ENCODE measurements at regions of chr9 and their contacts with region 1.

Region 1: DNA sequence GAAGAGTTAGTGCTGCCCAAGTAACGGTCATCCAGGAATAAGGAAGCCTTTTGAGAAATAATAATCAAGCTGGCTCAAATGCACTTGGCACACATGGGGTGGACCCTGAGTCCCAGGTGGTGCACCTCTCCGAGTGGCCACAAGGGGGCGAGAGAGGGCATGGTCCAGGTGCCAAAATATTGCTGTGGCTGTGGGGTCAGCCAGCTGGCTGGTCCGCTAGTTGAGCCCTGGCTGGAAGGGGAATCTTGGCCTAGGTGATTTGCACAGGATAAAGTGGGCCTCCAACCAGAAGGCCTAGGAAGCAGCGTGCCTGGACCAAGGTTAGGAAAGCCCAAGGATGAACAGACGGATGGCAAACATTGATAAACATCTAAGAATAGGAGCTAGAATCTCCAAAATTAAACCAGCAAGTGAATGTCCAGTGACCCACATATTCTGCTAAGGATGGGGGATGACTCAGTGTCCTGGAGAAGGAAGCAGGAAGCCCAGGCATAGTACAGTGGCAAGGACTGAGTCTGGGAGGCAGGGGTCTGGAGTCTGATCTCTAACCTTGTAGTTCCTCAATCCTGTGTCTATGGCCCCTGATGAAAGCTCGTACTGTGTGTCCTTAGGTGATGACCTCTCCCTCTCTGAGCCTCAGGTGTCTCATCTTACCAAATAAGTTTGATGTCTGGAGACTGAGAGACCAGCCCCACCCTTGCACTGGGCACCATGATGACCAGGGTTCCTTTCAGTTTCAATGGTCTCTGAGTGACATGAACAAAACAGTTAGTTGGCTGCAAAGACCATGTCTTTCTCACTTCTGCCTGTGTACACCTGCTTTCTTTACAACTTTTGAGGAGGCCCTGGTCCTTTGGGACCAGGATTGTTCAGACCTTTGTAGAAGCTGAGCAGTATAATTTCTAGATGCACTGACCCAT is 19.2 kb upstream of the SHB start:
- DNase-seq: no peak
- H3K4me3 ChIP-seq: no peak overlapping the region
- H3K27ac ChIP-seq: no peak overlapping the region
- H3K27me3 ChIP-seq: no peaks in the 10 kb centered on the region
- CTCF ChIP-seq: peak; percentile 96

Region 2: GRCh38 chr9:37913480-37914153 is 174.6 kb before region 1 on chr9:
- CTCF ChIA-PET with region 1: interaction called, 28 read pairs
- POLR2A ChIA-PET with region 1: no interaction called
- DNase-seq: no peak
- H3K4me3 ChIP-seq: no peak overlapping the region
- H3K27ac ChIP-seq: no peak overlapping the region
- H3K27me3 ChIP-seq: no peaks in the 10 kb centered on the region
- CTCF ChIP-seq: peak; percentile 99

Region 3: DNA sequence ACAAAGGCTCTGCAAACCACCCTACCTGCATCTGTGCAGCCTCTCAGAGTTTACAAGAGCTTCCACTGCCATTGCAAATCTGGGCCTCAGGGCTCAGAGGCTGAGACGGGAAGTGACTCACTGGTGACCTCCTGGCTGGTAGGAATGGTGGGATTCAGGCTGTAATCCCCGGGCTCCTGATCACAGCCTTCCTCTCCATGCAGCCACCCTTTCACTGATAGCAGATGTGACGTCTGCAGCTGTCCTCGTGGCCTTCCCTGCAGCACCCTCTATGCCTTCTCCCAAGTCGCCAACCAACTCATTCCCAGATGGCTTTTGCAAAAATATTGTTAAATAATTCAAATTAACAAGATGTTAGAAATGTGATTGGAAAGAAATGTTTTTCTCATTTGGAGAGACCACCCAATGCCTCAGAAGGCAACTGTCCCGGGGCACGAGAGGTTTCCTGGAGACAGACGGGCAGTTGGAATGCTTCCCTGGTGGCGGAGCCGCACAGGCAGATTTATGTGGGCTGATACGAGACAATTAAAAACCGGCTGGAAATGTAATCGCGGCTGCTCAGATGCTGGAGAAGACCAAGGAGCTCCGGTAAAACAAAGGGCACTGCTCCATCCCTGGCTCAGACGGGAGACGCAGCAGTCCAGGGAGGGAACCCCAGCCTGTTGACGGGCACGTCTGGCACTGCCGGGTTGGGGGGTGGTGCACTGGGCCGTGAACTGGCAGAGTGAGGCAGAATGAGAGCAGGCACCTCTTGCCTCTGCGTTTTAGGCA is 150.0 kb before region 1 on chr9:
- CTCF ChIA-PET with region 1: interaction called, 11 read pairs
- POLR2A ChIA-PET with region 1: no interaction called
- DNase-seq: peak; percentile 41
- H3K4me3 ChIP-seq: peak overlapping the region; percentile 7
- H3K27ac ChIP-seq: peak overlapping the region; percentile 87
- H3K27me3 ChIP-seq: no peaks in the 10 kb centered on the region
- CTCF ChIP-seq: 0 out of 2 replicates have a peak, but pooled peaks have one; percentile 7

Region 4: GRCh38 chr9:38068866-38069629 is 19.2 kb before region 1 on chr9 and contains the start of gene SHB:
- CTCF ChIA-PET with region 1: interaction called, 16 read pairs
- POLR2A ChIA-PET with region 1: no interaction called
- DNase-seq: no peak
- H3K4me3 ChIP-seq: peak within 1 kb of the TSS; percentile 93
- H3K27ac ChIP-seq: peak within 1 kb of the TSS; percentile 11
- H3K27me3 ChIP-seq: no peaks in the 10 kb centered on the region
- CTCF ChIP-seq: no peak; the same call in 1 of the 2 replicates
- polyA plus RNA-seq, gene SHB: 16.7 and 20.3 TPM in 2 replicates

Region 5: DNA sequence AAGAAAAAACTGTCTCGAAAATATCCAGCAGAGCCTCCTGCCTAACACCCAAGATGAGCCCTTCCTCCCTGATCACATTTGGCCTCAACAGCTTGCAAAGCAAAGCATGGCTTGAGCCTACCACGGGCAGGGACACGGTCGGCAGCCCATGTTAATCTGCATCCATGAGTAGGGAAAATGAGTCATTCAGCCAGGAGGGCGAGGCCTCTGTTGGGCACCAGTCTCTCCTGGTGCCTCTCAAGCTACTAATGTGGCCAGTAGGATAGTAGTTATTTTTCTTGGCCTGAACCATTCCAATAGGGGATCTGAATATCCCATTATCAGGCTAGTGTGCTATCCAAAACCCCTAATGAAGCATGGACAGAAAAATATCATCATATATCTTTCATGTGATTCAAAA is 23.8 kb after region 1 on chr9:
- CTCF ChIA-PET with region 1: interaction called, 10 read pairs
- POLR2A ChIA-PET with region 1: no interaction called
- DNase-seq: no peak
- H3K4me3 ChIP-seq: no peak overlapping the region
- H3K27ac ChIP-seq: no peak overlapping the region
- H3K27me3 ChIP-seq: peaks cover 41% of the 10 kb centered on the region
- CTCF ChIP-seq: no peak

Region 6: DNA sequence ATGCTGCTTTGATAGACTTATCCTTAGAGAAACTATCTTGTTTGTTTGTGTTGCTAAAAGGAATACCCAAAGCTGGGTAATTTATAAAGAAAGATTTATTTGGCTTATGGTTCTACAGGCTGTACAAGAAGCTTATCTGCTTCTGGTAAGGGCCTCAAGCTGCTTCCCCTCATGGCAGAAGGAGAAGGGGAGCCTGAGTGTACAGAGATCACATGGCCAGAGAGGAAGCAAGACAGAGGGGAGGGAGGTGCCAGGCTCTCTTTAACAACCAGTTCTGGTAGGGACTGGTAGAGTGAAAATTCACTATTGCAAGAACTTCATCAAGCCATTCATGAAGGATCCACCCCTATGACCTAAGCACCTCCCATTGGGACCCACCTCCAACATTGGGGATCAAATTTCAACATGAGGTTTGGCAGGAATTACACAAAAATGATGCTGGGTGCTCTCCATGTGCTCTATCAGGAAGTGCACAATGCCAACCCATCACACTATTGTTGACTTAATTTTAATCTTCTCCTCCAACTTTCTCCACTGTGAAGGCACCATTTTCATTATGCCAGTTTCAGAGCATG is 95.8 kb after region 1 on chr9:
- CTCF ChIA-PET with region 1: no interaction called
- POLR2A ChIA-PET with region 1: no interaction called
- DNase-seq: no peak
- H3K4me3 ChIP-seq: no peak overlapping the region
- H3K27ac ChIP-seq: no peak overlapping the region
- H3K27me3 ChIP-seq: no peaks in the 10 kb centered on the region
- CTCF ChIP-seq: no peak

Measured in AG04450 (cell line).